ENCODE measurements at regions of chr10 and their contacts with region 1.

Region 1: DNA sequence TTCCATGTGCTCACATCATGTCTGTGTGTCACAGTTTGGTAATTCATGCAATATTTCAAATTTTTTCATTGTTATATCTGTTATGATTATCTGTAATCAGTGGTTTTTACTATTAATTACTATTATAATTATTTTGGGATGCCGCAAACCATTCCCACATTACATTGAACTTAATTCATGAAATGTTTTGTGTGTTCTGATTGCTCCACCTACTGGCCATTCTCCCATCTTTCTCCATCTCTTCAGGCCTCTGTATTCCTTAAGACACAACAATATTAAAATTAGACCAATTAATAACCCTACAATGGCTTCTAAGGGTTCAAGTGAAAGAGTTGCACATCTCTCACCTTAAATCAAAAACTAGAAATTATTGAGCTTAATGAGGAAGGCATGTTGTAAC is 398.5 kb downstream of the PCDH15 start:
- DNase-seq: no peak
- ATAC-seq: no peak

Region 2: GRCh38 chr10:54009672-54010071 is 392.9 kb before region 1 on chr10:
- intact Hi-C with region 1: loop called (anchors 10 kb)
- DNase-seq: peak; percentile 20
- ATAC-seq: no peak

Measured in Right ventricle myocardium superior (tissue), 1 donor.